ENCODE measurements at regions of chr16 and their contacts with region 1.

Region 1: GRCh38 chr16:88610080-88610479 is 28.3 kb upstream of the IL17C start:
- DNase-seq: no peak
- H3K4me3 ChIP-seq: no peak overlapping the region
- H3K27ac ChIP-seq: no peak overlapping the region
- H3K4me1 ChIP-seq: no peaks in the 10 kb centered on the region
- H3K27me3 ChIP-seq: no peaks in the 10 kb centered on the region
- CTCF ChIP-seq: no peak
- POLR2A ChIP-seq: no peak

Region 2: DNA sequence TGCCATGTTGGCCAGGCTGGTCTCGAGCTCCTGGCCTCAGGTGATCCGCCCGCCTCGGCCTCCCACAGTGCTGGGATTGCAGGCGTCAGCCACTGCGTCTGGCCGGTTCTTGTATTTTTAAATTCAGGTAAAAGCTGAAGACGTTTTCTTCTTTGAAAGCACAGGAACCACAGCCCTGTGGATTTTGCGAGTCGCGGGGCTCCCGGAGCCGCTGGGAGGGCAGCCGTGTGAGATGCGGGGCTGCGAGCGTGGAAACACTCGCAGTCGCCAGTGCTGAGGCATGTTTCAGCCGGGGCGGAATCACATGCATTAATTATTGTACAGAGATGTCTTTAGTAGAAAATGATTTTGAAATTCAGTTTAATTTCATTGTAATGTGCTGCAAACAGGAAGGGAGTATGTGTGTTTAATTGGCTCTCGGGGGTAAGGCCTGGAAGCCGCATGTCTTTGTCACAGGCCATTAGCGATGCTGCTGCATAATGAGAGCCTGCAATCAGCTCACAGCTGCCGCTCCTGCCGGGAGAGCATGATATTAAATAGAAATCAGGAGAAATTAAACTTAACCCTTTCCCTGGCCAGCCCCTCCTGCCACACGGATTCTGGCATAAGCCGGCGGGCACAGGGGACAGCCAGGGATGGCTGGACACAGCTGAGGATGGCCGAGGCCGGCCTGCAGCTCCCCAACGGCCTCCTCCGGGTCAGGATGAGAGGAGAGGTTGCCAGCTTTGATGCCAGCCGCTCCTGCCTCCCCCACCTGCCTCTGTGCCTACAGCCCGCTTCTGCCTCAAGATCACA is 526.1 kb after region 1 on chr16:
- intact Hi-C with region 1: loop called (anchors 5 kb)
- DNase-seq: no peak
- H3K4me3 ChIP-seq: no peak overlapping the region
- H3K27ac ChIP-seq: no peak overlapping the region
- H3K4me1 ChIP-seq: no peaks in the 10 kb centered on the region
- H3K27me3 ChIP-seq: no peaks in the 10 kb centered on the region
- CTCF ChIP-seq: no peak
- POLR2A ChIP-seq: no peak

Measured in breast epithelium (tissue), 4 donors.